PC-9 (cell line): ENCODE measurements at regions of chr14 and their contacts with region 1.

Region 1: DNA sequence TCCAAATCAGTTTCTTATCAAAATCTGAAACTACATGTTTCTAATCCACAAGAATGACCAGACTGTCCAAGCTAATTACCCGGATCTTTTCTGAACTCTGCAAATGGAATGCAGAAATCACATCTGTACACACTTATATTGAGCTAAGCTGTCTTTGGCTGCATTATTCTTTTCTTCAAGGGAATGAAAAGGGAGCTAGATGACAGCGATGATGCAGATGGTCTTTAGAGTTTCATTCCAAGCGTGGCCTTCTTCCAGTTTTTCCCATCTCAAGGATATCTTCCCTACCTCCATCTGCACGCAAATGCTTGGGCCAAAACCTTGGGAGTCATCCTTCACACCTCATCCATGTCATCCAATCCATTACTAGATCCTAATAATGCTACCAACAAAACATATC is 12.6 kb downstream of the KCNH5 start:
- DNase-seq: no peak
- H3K4me3 ChIP-seq: no peak overlapping the region
- H3K27ac ChIP-seq: no peak overlapping the region
- H3K4me1 ChIP-seq: no peaks in the 10 kb centered on the region
- H3K27me3 ChIP-seq: no peaks in the 10 kb centered on the region
- CTCF ChIP-seq: no peak

Region 2: DNA sequence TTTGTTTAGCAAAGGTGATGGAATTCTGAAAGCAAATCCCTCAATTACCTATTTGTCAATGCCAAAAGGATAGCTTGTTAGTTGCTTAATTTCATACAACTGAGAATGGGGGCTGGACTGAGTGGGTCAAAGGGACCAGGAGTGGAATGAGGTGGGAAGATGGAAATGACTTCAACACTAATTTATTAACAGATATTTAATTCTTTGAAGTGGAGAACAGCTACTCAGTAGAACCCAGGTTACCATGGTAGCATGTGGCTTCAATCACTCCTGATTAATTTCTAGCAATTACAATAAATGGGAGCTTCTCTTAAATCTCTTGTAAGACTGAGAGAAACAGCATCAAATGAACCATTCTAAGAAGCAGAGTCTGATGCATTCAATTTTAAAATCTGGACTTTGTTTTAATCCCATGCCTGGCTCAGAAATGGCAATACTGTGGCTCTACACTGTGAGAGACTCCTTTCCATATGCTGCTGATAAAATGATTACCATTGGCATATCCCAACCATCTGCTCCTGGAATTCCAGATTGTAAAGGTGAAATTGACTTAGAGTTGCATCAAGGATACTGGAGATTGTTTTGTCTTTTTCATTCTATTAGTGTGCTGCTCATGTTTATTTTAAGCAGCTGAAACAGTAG is 662.6 kb before region 1 on chr14:
- CTCF ChIA-PET with region 1: no interaction called
- POLR2A ChIA-PET with region 1: no interaction called
- intact Hi-C with region 1: no loop called
- DNase-seq: no peak
- H3K4me3 ChIP-seq: no peak overlapping the region
- H3K27ac ChIP-seq: no peak overlapping the region
- H3K4me1 ChIP-seq: no peaks in the 10 kb centered on the region
- H3K27me3 ChIP-seq: no peaks in the 10 kb centered on the region
- CTCF ChIP-seq: no peak

Region 3: GRCh38 chr14:62800577-62800976 is 232.1 kb before region 1 on chr14:
- CTCF ChIA-PET with region 1: no interaction called
- POLR2A ChIA-PET with region 1: interaction called, 10 read pairs
- intact Hi-C with region 1: no loop called
- DNase-seq: no peak
- H3K4me3 ChIP-seq: no peak overlapping the region
- H3K27ac ChIP-seq: no peak overlapping the region
- H3K4me1 ChIP-seq: no peaks in the 10 kb centered on the region
- H3K27me3 ChIP-seq: no peaks in the 10 kb centered on the region
- CTCF ChIP-seq: no peak

Region 4: GRCh38 chr14:62914025-62914424 is 118.6 kb before region 1 on chr14:
- CTCF ChIA-PET with region 1: no interaction called
- POLR2A ChIA-PET with region 1: no interaction called
- intact Hi-C with region 1: no loop called
- DNase-seq: no peak
- H3K4me3 ChIP-seq: no peak overlapping the region
- H3K27ac ChIP-seq: no peak overlapping the region
- H3K4me1 ChIP-seq: no peaks in the 10 kb centered on the region
- H3K27me3 ChIP-seq: no peaks in the 10 kb centered on the region
- CTCF ChIP-seq: no peak

Region 5: GRCh38 chr14:63203618-63204406 is 171.2 kb after region 1 on chr14:
- CTCF ChIA-PET with region 1: no interaction called
- POLR2A ChIA-PET with region 1: no interaction called
- intact Hi-C with region 1: no loop called
- DNase-seq: peak in 1 of 2 experiments; percentile 28
- H3K4me3 ChIP-seq: no peak overlapping the region
- H3K27ac ChIP-seq: no peak overlapping the region
- H3K4me1 ChIP-seq: no peaks in the 10 kb centered on the region
- H3K27me3 ChIP-seq: no peaks in the 10 kb centered on the region
- CTCF ChIP-seq: no peak